ENCODE measurements at regions of chr1 and their contacts with region 1.

Region 1: DNA sequence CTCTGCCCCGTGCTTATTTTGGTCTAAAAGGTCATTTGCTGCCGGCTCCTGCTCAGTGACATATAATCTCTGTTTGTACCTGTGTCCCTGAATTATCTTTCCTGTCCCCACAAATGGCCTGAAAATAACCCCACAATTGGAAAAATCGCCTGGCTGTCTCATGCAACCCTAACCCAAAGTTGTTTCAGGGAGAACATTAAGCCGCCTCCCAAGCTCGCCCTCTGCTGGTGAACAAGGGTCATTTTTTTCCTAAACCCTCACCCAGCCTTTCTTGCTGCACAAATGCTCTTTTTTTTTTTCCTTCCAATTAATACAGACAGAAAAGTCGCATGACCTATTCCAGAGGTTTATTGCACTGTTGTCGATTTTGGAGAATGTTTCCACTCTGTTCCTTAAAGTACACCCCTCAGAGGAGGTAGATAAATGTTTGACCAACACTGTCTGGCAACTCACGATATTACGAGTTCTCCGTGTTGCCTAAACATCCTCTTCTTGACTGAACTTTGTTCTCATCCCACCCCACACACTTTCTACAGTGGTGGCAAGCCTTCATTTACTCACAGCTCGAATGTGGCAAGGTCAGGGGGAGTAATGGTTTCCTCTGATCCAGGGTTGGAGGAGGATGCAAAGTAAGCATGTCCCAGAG is 148.7 kb downstream of the ZZZ3 start:
- DNase-seq: peak in 4 of 5 donors; percentile 45 to 57 (median 51)
- ATAC-seq: peak; percentile 57 to 71 (median 64)
- H3K4me3 ChIP-seq: no peak overlapping the region
- H3K27ac ChIP-seq: no peak overlapping the region
- H3K4me1 ChIP-seq: peaks cover 0 to 8% (median under 1%) of the 10 kb centered on the region in 12 donors
- H3K27me3 ChIP-seq: no peaks in the 10 kb centered on the region
- CTCF ChIP-seq: peak; percentile 74 to 87 (median 83)
- POLR2A ChIP-seq: no peak

Region 2: GRCh38 chr1:77143529-77144121 is 390.2 kb before region 1 on chr1:
- intact Hi-C with region 1: loop called in 9 of 10 experiments (anchors 1 to 10 kb)
- DNase-seq: no peak
- ATAC-seq: no peak
- H3K4me3 ChIP-seq: no peak overlapping the region
- H3K27ac ChIP-seq: no peak overlapping the region
- H3K4me1 ChIP-seq: no peaks in the 10 kb centered on the region
- H3K27me3 ChIP-seq: no peaks in the 10 kb centered on the region
- CTCF ChIP-seq: peak in 9 of 12 donors; percentile 14 to 46 (median 31)
- POLR2A ChIP-seq: no peak

Region 3: GRCh38 chr1:77605246-77606026 is 71.7 kb after region 1 on chr1:
- intact Hi-C with region 1: no loop called
- DNase-seq: peak; percentile 60 to 81 (median 72)
- ATAC-seq: peak; percentile 73 to 90 (median 83)
- H3K4me3 ChIP-seq: no peak overlapping the region
- H3K27ac ChIP-seq: peak overlapping the region in 5 of 12 donors; percentile 24 to 47 (median 28)
- H3K4me1 ChIP-seq: peaks cover 0 to 22% (median 14%) of the 10 kb centered on the region in 12 donors
- H3K27me3 ChIP-seq: no peaks in the 10 kb centered on the region
- CTCF ChIP-seq: no peak
- POLR2A ChIP-seq: no peak